ENCODE measurements at regions of chr22 and their contacts with region 1.

Region 1: GRCh38 chr22:46296257-46297150 is at the start of gene GTSE1:
- DNase-seq: peak; percentile 95
- ATAC-seq: peak; percentile 93
- H3K4me3 ChIP-seq: peak within 1 kb of the TSS; percentile 82 to 91 (median 84)
- H3K27ac ChIP-seq: peak within 1 kb of the TSS; percentile 62
- H3K4me1 ChIP-seq: peaks cover 33% of the 10 kb centered on the region
- H3K27me3 ChIP-seq: no peaks in the 10 kb centered on the region; a peak in 1 of 5 replicates
- CTCF ChIP-seq: peak; percentile 84
- EP300 ChIP-seq: no peak
- POLR2A ChIP-seq: peak; percentile 43 to 49; a peak in 3 of 4 replicates
- RAD21 ChIP-seq: peak; percentile 56
- total RNA-seq, gene GTSE1: 13.5 and 15.3 TPM in 2 replicates

Region 2: DNA sequence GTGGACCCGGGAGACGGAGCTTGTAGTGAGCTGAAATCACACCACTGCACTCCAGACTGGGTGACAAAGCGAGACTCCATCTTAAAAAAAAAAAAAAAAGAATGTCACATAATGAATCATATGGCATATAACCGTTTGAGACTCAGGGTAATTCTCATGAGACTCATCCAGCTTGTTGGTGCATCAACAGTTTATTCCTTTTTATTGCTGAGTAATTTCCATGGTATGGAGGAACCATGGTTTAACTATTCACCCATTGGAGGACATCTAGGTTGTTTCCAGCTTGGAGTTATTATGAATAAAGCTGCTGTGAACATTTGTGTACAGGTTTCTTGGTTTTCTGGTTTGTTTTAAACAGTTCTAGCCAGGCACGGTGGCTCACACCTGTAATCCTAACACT is 120.9 kb before region 1 on chr22:
- CTCF ChIA-PET with region 1: no interaction called
- POLR2A ChIA-PET with region 1: no interaction called
- in situ Hi-C with region 1: no loop called
- intact Hi-C with region 1: no loop called
- DNase-seq: no peak
- ATAC-seq: no peak
- H3K4me3 ChIP-seq: no peak overlapping the region
- H3K27ac ChIP-seq: no peak overlapping the region
- H3K4me1 ChIP-seq: peaks cover 43% of the 10 kb centered on the region
- H3K27me3 ChIP-seq: no peaks in the 10 kb centered on the region
- CTCF ChIP-seq: no peak
- EP300 ChIP-seq: no peak
- POLR2A ChIP-seq: no peak
- RAD21 ChIP-seq: no peak

Region 3: GRCh38 chr22:46219636-46220035 is 76.9 kb before region 1 on chr22:
- CTCF ChIA-PET with region 1: no interaction called
- POLR2A ChIA-PET with region 1: no interaction called
- in situ Hi-C with region 1: no loop called
- intact Hi-C with region 1: no loop called
- DNase-seq: no peak
- ATAC-seq: no peak
- H3K4me3 ChIP-seq: no peak overlapping the region
- H3K27ac ChIP-seq: no peak overlapping the region
- H3K4me1 ChIP-seq: no peaks in the 10 kb centered on the region
- H3K27me3 ChIP-seq: no peaks in the 10 kb centered on the region
- CTCF ChIP-seq: no peak
- EP300 ChIP-seq: no peak
- POLR2A ChIP-seq: no peak
- RAD21 ChIP-seq: no peak

Region 4: DNA sequence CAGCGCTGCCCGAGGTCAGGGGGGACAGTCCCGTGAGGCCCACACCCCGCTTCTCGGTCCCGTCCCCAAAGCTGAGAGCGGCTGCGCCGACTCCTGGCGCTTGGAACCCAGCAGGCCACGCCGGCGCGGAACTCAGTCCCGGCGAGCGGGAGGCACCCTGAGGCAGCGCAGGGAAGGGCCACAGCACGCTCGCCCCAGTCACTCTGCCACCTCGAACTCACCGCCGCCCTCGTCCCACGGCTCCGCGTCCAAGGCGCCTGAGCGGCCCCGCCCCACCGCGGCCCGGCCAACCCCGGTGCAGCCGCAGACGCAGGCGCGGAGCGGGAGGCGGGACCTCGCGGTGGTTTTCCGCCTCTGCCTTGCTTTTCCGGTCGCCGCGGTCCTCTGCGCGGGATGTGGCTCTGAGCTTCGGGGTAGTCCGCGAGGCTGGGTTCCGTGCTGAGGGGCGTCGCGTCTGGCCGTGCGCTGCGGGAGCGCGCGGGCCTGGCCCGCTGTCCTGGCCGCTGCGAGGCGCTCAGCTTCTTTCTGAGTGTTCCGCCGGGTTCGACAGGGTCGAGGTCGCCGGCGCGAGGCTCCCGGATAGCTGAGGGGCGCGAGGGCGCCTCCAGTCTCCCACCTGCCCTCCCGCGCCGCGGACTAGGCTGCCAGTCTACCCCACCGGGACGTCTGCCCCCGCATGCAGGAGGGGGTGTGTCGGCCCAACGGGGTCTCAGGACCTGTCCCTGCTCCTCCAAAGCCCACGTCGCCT is 46.3 kb before region 1 on chr22 and contains the start of gene CDPF1:
- CTCF ChIA-PET with region 1: no interaction called
- POLR2A ChIA-PET with region 1: interaction called, 13 read pairs
- in situ Hi-C with region 1: no loop called
- intact Hi-C with region 1: no loop called
- DNase-seq: peak; percentile 73
- ATAC-seq: peak; percentile 93
- H3K4me3 ChIP-seq: peak within 1 kb of the TSS; percentile 70 to 95 (median 89)
- H3K27ac ChIP-seq: peak within 1 kb of the TSS; percentile 85
- H3K4me1 ChIP-seq: peaks cover 46% of the 10 kb centered on the region
- H3K27me3 ChIP-seq: no peaks in the 10 kb centered on the region
- CTCF ChIP-seq: peak; percentile 47
- EP300 ChIP-seq: no peak
- POLR2A ChIP-seq: peak; percentile 80 to 97
- RAD21 ChIP-seq: peak; percentile 21
- total RNA-seq, gene CDPF1: 5.2 and 6.0 TPM in 2 replicates